ENCODE measurements at regions of chr10 and their contacts with region 1.

Region 1: DNA sequence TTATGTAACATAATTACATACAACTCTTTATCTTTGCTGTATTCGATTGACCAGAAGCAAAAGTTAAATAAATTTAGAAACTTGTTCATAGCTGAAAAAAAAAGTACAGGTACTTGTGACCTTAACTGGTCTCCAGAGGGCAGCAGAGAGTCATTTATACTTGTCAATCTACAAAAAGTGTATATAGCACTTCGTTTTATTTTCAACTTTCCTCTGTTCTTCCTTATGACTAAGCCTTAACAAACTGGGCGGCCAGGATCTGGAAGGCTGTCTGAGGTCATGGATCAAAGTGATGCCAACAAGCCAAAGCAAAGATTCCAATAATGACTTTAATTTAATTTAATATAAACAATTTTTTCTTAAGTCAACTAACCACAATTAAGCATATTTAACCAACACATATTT is 29.8 kb downstream of the C10orf67 start:
- DNase-seq: no peak
- H3K4me3 ChIP-seq: no peak overlapping the region
- H3K27ac ChIP-seq: no peak overlapping the region
- H3K4me1 ChIP-seq: no peaks in the 10 kb centered on the region
- H3K27me3 ChIP-seq: no peaks in the 10 kb centered on the region
- CTCF ChIP-seq: peak in 3 of 4 experiments; percentile 42 to 71 (median 45)
- EP300 ChIP-seq: no peak
- POLR2A ChIP-seq: no peak

Region 2: GRCh38 chr10:22900841-22901601 is 413.8 kb before region 1 on chr10:
- intact Hi-C with region 1: no loop called
- DNase-seq: no peak
- H3K4me3 ChIP-seq: no peak overlapping the region
- H3K27ac ChIP-seq: no peak overlapping the region
- H3K4me1 ChIP-seq: no peaks in the 10 kb centered on the region
- H3K27me3 ChIP-seq: no peaks in the 10 kb centered on the region
- CTCF ChIP-seq: no peak
- EP300 ChIP-seq: no peak
- POLR2A ChIP-seq: no peak

Region 3: GRCh38 chr10:23525406-23525805 is 210.6 kb after region 1 on chr10:
- intact Hi-C with region 1: loop called (anchors 2 kb)
- DNase-seq: no peak
- H3K4me3 ChIP-seq: no peak overlapping the region
- H3K27ac ChIP-seq: no peak overlapping the region
- H3K4me1 ChIP-seq: no peaks in the 10 kb centered on the region
- H3K27me3 ChIP-seq: no peaks in the 10 kb centered on the region
- CTCF ChIP-seq: peak in 3 of 4 experiments; percentile 6 to 48 (median 17)
- EP300 ChIP-seq: no peak
- POLR2A ChIP-seq: no peak

Region 4: GRCh38 chr10:23702977-23703414 is 388.2 kb after region 1 on chr10:
- intact Hi-C with region 1: loop called (anchors 5 kb)
- DNase-seq: peak; percentile 66
- H3K4me3 ChIP-seq: no peak overlapping the region
- H3K27ac ChIP-seq: no peak overlapping the region
- H3K4me1 ChIP-seq: no peaks in the 10 kb centered on the region
- H3K27me3 ChIP-seq: peaks cover 0 to 5% (median 0%) of the 10 kb centered on the region in 3 donors
- CTCF ChIP-seq: peak in 3 of 4 experiments; percentile 8 to 57 (median 47)
- EP300 ChIP-seq: no peak
- POLR2A ChIP-seq: no peak